Activated B cell treated with CpG ODN at 0.5 μM for 24 hours (primary cell): ENCODE measurements at regions of chrX and their contacts with region 1.

Region 1: GRCh38 chrX:40097497-40098263 is at the start of gene BCOR:
- DNase-seq: peak; percentile 59
- ATAC-seq: peak; percentile 16
- H3K4me3 Mint-ChIP-seq: peak within 1 kb of the TSS; percentile 89
- H3K27ac Mint-ChIP-seq: peak within 1 kb of the TSS; percentile 94
- H3K4me1 Mint-ChIP-seq: peaks cover 36% of the 10 kb centered on the region
- H3K27me3 Mint-ChIP-seq: no peaks in the 10 kb centered on the region
- CTCF ChIP-seq: no peak
- total RNA-seq, gene BCOR: 59.3 and 60.4 TPM in 2 replicates

Region 2: GRCh38 chrX:39491548-39492297 is 606.0 kb before region 1 on chrX:
- CTCF ChIA-PET with region 1: no interaction called
- POLR2A ChIA-PET with region 1: no interaction called
- intact Hi-C with region 1: loop called (anchors 5 kb)
- DNase-seq: peak; percentile 36
- ATAC-seq: peak; percentile 91
- H3K4me3 Mint-ChIP-seq: peak overlapping the region; percentile 70
- H3K27ac Mint-ChIP-seq: peak overlapping the region; percentile 84
- H3K4me1 Mint-ChIP-seq: peaks cover 52% of the 10 kb centered on the region
- H3K27me3 Mint-ChIP-seq: no peaks in the 10 kb centered on the region
- CTCF ChIP-seq: no peak

Region 3: GRCh38 chrX:39827951-39828350 is 269.7 kb before region 1 on chrX:
- CTCF ChIA-PET with region 1: no interaction called
- POLR2A ChIA-PET with region 1: interaction called, 3 read pairs
- intact Hi-C with region 1: loop called (anchors 5 kb)
- DNase-seq: peak; percentile 57
- ATAC-seq: peak; percentile 100
- H3K4me3 Mint-ChIP-seq: peak overlapping the region; percentile 4
- H3K27ac Mint-ChIP-seq: no peak overlapping the region
- H3K4me1 Mint-ChIP-seq: peaks cover 29% of the 10 kb centered on the region
- H3K27me3 Mint-ChIP-seq: peaks cover 42% of the 10 kb centered on the region
- CTCF ChIP-seq: no peak

Region 4: GRCh38 chrX:40019541-40019940 is 78.1 kb before region 1 on chrX:
- CTCF ChIA-PET with region 1: no interaction called
- POLR2A ChIA-PET with region 1: interaction called, 42 read pairs
- intact Hi-C with region 1: no loop called
- DNase-seq: no peak
- ATAC-seq: no peak
- H3K4me3 Mint-ChIP-seq: no peak overlapping the region
- H3K27ac Mint-ChIP-seq: no peak overlapping the region
- H3K4me1 Mint-ChIP-seq: peaks cover 5% of the 10 kb centered on the region
- H3K27me3 Mint-ChIP-seq: no peaks in the 10 kb centered on the region
- CTCF ChIP-seq: no peak

Region 5: GRCh38 chrX:40146262-40147125 is 48.8 kb after region 1 on chrX:
- CTCF ChIA-PET with region 1: no interaction called
- POLR2A ChIA-PET with region 1: interaction called, 129 read pairs
- intact Hi-C with region 1: no loop called
- DNase-seq: no peak
- ATAC-seq: peak; percentile 60
- H3K4me3 Mint-ChIP-seq: peak overlapping the region; percentile 53
- H3K27ac Mint-ChIP-seq: no peak overlapping the region
- H3K4me1 Mint-ChIP-seq: peaks cover 36% of the 10 kb centered on the region
- H3K27me3 Mint-ChIP-seq: no peaks in the 10 kb centered on the region
- CTCF ChIP-seq: no peak

Region 6: GRCh38 chrX:40175511-40176350 is 78.1 kb after region 1 on chrX:
- CTCF ChIA-PET with region 1: interaction called, 6 read pairs
- POLR2A ChIA-PET with region 1: interaction called, 268 read pairs
- intact Hi-C with region 1: loop called (anchors 1 kb)
- DNase-seq: peak; percentile 69
- ATAC-seq: peak; percentile 51
- H3K4me3 Mint-ChIP-seq: peak overlapping the region; percentile 88
- H3K27ac Mint-ChIP-seq: peak overlapping the region; percentile 98
- H3K4me1 Mint-ChIP-seq: peaks cover 53% of the 10 kb centered on the region
- H3K27me3 Mint-ChIP-seq: no peaks in the 10 kb centered on the region
- CTCF ChIP-seq: no peak

Region 7: DNA sequence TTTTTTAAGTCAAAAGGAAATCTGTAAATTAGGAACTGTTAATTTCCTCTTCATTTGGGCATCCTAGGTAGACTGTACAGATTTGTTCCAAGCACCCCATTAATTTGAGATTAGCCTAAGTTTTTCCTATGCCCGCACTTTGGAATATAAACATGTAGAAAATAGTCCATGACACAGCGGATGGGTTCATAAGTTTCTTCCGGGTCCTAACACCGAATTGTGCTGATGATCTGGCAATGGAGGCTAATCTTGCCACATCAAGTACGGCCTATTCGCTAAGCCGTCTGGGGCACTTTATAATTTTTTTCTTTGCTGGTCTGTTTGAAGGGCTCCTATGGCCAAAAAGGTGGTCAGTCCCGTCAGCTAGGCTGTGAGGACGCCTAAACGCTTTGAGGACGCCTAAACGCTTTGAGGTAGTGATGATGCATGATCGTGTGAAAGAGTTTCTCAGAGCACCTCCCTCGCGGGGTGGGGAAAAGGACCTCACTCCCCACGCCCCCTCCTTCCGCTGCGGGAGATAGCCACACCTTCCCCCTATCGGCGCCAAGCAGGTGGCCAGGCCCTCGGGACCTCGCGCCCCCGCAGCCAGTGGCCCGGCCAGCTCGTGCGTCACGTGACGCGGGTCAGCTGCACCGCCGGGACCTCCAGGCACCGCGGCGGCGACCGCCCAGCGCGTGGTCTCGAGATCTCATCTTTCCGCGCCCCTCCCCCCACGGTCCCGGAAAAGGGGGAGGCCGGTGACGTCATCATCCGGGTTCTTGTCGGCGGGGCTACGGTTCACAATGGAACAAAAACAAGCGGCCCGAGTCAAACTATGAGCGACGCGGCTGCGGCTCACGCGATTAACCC is 986.6 kb after region 1 on chrX:
- CTCF ChIA-PET with region 1: no interaction called
- POLR2A ChIA-PET with region 1: interaction called, 9 read pairs
- intact Hi-C with region 1: loop called (anchors 2 kb)
- DNase-seq: peak; percentile 94
- ATAC-seq: peak; percentile 64
- H3K4me3 Mint-ChIP-seq: peak overlapping the region; percentile 90
- H3K27ac Mint-ChIP-seq: peak overlapping the region; percentile 99
- H3K4me1 Mint-ChIP-seq: peaks cover 36% of the 10 kb centered on the region
- H3K27me3 Mint-ChIP-seq: no peaks in the 10 kb centered on the region
- CTCF ChIP-seq: no peak